IMR-90 (cell line): ENCODE measurements at regions of chr21 and their contacts with region 1.

Region 1: DNA sequence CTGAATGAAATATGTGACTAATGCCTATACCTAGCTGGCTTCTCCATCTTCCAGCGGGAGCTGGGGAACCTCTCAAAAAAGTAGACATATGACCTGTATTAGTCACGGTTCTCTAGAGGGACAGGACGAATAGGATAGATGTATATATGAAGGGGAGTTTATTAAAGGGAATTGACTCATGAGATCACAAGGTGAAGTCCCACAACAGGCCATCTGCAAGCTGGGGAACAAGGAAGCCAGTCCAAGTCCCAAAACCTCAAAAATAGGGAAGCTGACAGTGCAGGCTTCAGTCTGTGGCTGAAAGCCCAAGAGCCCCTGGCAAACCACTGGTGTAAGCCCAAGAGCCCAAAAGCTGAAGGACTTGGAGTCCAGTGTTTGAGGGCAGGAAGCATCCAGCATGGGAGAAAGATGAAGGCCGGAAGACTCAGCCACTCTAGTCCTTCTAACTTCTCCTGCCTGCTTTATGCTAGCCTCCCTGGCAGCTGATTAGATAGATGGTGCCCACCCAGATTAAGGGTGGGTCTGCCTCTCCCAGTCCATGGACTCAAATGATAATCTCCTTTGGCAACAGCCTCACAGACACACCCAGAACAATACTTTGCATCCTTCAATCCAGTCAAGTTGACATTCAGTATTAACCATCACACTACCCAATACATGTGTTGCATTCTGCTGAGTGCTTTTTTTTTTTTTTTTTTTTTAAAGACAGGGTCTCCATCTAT is 19.6 kb downstream of the OLIG1 start:
- DNase-seq: no peak
- ATAC-seq: no peak
- H3K4me3 ChIP-seq: no peak overlapping the region
- H3K27ac ChIP-seq: no peak overlapping the region
- H3K4me1 ChIP-seq: no peaks in the 10 kb centered on the region
- H3K27me3 ChIP-seq: peaks cover 15% of the 10 kb centered on the region
- CTCF ChIP-seq: no peak
- POLR2A ChIP-seq: no peak
- RAD21 ChIP-seq: no peak

Region 2: GRCh38 chr21:32698971-32699693 is 390.4 kb before region 1 on chr21:
- CTCF ChIA-PET with region 1: no interaction called
- POLR2A ChIA-PET with region 1: interaction called, 13 read pairs
- dilution Hi-C with region 1: no loop called
- in situ Hi-C with region 1: no loop called
- intact Hi-C with region 1: no loop called
- DNase-seq: peak; percentile 31
- ATAC-seq: no peak
- H3K4me3 ChIP-seq: no peak overlapping the region
- H3K27ac ChIP-seq: no peak overlapping the region
- H3K4me1 ChIP-seq: peaks cover 6% of the 10 kb centered on the region
- H3K27me3 ChIP-seq: no peaks in the 10 kb centered on the region
- CTCF ChIP-seq: no peak
- POLR2A ChIP-seq: no peak
- RAD21 ChIP-seq: no peak